Activated B cell treated with CpG ODN at 0.5 μM for 24 hours (primary cell): ENCODE measurements at regions of chr13 and their contacts with region 1.

Region 1: GRCh38 chr13:76903544-76904162 is 17.4 kb upstream of the KCTD12 start:
- DNase-seq: no peak
- ATAC-seq: peak; percentile 89
- H3K4me3 Mint-ChIP-seq: no peak overlapping the region
- H3K27ac Mint-ChIP-seq: no peak overlapping the region
- H3K4me1 Mint-ChIP-seq: no peaks in the 10 kb centered on the region
- H3K27me3 Mint-ChIP-seq: peaks cover 17% of the 10 kb centered on the region
- CTCF ChIP-seq: peak; percentile 83

Region 2: DNA sequence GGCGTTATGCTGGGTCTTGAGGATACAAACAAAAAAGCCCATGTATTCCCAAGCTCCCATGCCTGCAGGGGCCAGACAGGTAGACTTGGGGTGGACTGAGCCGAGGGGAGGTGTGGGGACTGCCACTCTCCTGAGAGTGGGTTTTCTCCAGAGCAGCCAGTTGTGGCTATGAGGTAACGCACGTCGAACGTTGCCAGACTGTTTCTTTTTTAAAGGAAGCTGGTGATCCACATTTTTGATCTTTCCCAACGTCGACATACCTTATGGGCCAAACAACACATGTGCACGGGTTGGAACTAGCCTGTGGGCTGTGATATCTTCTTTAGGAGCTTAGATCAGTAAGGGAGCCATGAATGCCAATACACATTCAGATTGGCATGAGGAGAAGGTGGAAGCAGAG is 1206.9 kb before region 1 on chr13:
- CTCF ChIA-PET with region 1: interaction called, 46 read pairs
- POLR2A ChIA-PET with region 1: no interaction called
- intact Hi-C with region 1: loop called (anchors 1 kb)
- DNase-seq: no peak
- ATAC-seq: no peak
- H3K4me3 Mint-ChIP-seq: no peak overlapping the region
- H3K27ac Mint-ChIP-seq: no peak overlapping the region
- H3K4me1 Mint-ChIP-seq: no peaks in the 10 kb centered on the region
- H3K27me3 Mint-ChIP-seq: no peaks in the 10 kb centered on the region
- CTCF ChIP-seq: no peak

Region 3: DNA sequence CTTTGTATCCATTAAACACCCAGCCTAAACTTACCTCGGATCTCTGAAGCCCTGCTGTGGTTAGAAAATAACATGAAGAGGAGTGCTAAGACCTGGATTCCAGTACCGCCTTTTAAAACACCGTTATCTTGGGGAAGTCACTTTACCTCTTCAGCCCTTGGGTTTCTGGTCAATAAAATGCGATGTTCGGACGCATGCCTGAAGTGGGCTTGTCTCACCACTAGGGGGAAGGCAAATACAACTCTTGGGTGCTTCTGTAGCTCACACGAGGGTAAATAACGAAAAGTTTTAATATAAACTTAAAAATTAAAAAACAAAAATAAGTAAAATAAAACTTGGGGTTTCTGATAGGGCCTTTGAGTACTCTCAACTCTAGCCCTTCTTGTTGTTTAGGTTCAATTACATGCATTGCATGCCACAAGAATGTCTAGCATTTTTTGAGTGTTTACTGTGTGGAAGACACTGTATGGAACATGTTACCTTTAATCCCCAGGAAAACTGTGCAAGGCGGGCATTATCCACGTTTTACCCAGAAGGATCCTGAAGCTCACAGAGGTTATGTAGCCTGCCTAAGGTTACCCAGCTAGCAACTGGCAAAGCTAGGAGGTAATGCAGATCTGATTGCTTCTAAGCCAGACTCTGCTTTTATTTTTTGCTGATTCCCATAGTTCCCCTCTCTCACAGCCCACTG is 1027.1 kb before region 1 on chr13:
- CTCF ChIA-PET with region 1: interaction called, 49 read pairs
- POLR2A ChIA-PET with region 1: interaction called, 3 read pairs
- intact Hi-C with region 1: loop called (anchors 1 kb)
- DNase-seq: no peak
- ATAC-seq: peak; percentile 81
- H3K4me3 Mint-ChIP-seq: no peak overlapping the region
- H3K27ac Mint-ChIP-seq: no peak overlapping the region
- H3K4me1 Mint-ChIP-seq: peaks cover 2% of the 10 kb centered on the region
- H3K27me3 Mint-ChIP-seq: peaks cover 13% of the 10 kb centered on the region
- CTCF ChIP-seq: no peak

Region 4: GRCh38 chr13:76067850-76068249 is 835.8 kb before region 1 on chr13:
- CTCF ChIA-PET with region 1: no interaction called
- POLR2A ChIA-PET with region 1: no interaction called
- intact Hi-C with region 1: no loop called
- DNase-seq: no peak
- ATAC-seq: no peak
- H3K4me3 Mint-ChIP-seq: no peak overlapping the region
- H3K27ac Mint-ChIP-seq: no peak overlapping the region
- H3K4me1 Mint-ChIP-seq: no peaks in the 10 kb centered on the region
- H3K27me3 Mint-ChIP-seq: peaks cover 1% of the 10 kb centered on the region
- CTCF ChIP-seq: no peak

Region 5: DNA sequence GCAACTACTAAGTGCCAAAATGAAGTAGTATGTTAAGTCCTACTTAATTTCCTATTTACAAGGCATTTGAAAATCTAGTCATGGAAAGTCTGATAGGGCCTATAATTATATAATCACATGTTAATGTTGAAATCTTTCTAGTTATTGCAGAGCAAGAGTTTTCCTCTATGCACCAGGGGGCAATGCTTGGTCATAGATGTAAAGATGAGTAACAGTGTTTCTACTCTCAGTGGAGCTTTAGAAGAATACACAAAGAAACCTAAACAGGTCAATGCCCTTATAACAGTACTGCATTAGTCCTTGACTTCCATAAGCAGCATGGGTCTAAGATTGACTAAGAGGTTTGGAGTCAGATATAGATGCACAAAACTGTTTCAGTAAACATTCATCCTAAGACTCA is 236.1 kb before region 1 on chr13:
- CTCF ChIA-PET with region 1: interaction called, 5 read pairs
- POLR2A ChIA-PET with region 1: no interaction called
- intact Hi-C with region 1: loop called (anchors 1 kb)
- DNase-seq: no peak
- ATAC-seq: no peak
- H3K4me3 Mint-ChIP-seq: no peak overlapping the region
- H3K27ac Mint-ChIP-seq: no peak overlapping the region
- H3K4me1 Mint-ChIP-seq: no peaks in the 10 kb centered on the region
- H3K27me3 Mint-ChIP-seq: no peaks in the 10 kb centered on the region
- CTCF ChIP-seq: no peak